Panc1 (cell line): ENCODE measurements at regions of chr18 and their contacts with region 1.

Region 1: DNA sequence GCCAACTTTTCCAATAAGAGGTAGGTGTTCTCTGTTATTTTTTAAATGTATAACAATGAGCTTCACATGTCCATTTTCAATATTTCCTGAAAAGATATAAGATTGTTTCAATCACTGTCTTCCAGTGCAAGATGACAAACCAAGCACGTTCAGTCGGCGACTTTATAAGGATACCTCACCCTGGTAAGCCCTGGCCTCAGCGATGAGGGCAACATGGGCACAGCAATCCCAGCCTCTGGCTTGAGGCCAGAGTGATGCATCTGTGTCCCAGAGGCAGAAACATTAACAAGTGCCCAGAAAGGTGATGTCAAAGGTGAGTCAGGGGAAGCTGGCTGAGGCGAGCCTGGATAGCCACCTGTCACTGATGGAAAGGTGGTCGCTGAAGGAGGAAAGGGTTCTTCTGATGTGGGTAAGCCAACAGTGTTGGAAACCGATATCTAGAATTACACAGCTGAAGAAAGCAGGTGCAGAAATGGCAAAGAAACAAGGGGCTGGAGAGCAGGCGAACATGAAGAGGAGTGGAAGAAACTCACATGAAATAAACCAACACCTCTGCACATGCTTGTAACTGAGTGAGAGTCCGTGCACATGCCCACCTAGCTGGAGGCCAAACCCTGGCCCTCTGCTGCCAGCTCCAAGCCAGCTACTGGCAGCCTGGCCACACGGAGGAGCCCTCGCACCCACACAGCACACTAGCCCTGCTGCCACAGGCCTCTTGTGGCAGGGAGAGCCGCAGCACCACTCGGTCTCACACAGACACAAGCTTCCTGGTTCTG is 65.5 kb downstream of the FBXO15 start:
- DNase-seq: peak; percentile 20
- ATAC-seq: peak; percentile 99
- H3K4me3 ChIP-seq: no peak overlapping the region
- H3K27ac ChIP-seq: no peak overlapping the region
- H3K4me1 ChIP-seq: 0 out of 2 replicates have a peak, but pooled peaks cover 3% of the 10 kb centered on the region
- H3K27me3 ChIP-seq: peaks cover 19% of the 10 kb centered on the region
- CTCF ChIP-seq: peak; percentile 89

Region 2: DNA sequence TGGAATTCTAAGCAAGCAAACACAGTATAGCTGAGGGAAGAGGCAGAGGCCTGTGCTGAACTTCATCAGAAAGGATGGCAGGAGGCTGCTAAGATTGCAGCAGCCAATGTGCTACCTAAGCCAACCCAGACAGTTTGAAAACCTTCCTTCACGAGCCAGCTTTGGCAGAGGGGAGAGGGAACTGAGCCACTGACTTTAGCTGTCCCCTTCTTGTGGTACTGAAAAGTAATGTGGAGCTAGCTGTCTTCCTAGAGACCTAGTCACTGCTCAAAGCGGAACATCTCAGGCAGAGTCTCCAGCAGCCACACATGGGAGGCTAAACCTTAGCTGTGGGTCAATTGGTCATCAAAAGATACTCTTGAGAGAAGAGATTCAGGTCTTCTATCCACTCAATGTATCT is 353.5 kb before region 1 on chr18:
- CTCF ChIA-PET with region 1: no interaction called
- POLR2A ChIA-PET with region 1: no interaction called
- in situ Hi-C with region 1: no loop called
- intact Hi-C with region 1: no loop called
- DNase-seq: no peak
- ATAC-seq: no peak
- H3K4me3 ChIP-seq: no peak overlapping the region
- H3K27ac ChIP-seq: no peak overlapping the region
- H3K4me1 ChIP-seq: no peaks in the 10 kb centered on the region
- H3K27me3 ChIP-seq: no peaks in the 10 kb centered on the region
- CTCF ChIP-seq: no peak

Region 3: DNA sequence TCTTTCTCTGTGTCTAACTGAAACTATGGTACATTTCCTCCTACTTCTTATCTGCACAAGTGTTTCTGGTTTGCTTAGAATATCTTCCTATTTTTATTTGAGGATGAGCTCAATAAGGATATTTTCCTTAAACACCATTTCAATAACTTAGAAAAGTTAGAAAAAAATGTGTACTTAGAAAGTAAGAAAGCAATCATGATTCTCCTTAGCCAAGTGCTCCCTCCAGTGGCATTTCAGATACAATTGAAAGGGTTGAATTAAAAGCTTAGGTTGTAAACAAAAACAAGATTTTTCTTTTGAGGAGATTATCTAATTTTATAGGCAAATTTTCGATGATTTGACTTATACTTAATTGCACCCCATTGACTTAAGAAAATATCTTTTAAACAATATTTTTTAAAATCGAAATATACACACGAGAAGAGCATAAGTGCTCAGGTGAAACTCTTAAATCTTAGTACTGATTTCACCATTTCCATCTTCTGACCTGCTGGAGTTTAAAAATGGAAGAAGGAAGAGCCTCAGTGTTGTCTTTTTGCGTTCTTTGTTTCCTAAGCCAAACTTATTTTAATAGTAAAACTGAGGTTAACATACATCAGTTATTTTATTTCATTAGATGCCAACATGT is 260.4 kb after region 1 on chr18:
- CTCF ChIA-PET with region 1: interaction called, 13 read pairs
- POLR2A ChIA-PET with region 1: no interaction called
- in situ Hi-C with region 1: no loop called
- intact Hi-C with region 1: loop called (anchors 5 kb)
- DNase-seq: peak; percentile 54
- ATAC-seq: peak; percentile 83
- H3K4me3 ChIP-seq: no peak overlapping the region
- H3K27ac ChIP-seq: no peak overlapping the region
- H3K4me1 ChIP-seq: no peaks in the 10 kb centered on the region
- H3K27me3 ChIP-seq: peaks cover 29% of the 10 kb centered on the region
- CTCF ChIP-seq: peak; percentile 78; the same call in 1 of the 2 replicates